A673 (cell line): ENCODE measurements at regions of chr6 and their contacts with region 1.

Region 1: DNA sequence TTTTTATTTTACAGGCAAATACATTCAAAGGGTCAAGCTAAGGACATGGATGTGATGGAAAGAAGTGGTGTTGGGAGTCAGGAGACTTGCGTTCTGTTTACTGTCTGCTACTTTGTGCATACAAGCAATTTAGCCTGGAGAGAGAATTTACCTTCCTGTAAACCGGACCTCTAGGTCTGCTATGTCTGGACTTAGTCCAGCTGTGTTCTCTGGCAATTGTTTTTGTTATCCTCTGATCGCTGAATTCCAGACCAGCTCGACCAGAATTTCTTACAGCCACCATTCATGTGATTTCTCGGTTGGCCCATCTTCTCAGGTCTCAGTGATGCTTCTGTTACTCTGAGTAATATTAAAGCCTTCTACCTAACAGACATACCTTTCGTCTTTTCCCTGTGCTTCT is 75.1 kb downstream of the LRRC1 start:
- DNase-seq: no peak
- H3K4me3 ChIP-seq: no peak overlapping the region
- H3K27ac ChIP-seq: no peak overlapping the region
- H3K4me1 ChIP-seq: no peaks in the 10 kb centered on the region
- H3K27me3 ChIP-seq: no peaks in the 10 kb centered on the region
- CTCF ChIP-seq: no peak

Region 2: GRCh38 chr6:53916804-53917463 is 47.0 kb after region 1 on chr6:
- CTCF ChIA-PET with region 1: no interaction called
- POLR2A ChIA-PET with region 1: no interaction called
- intact Hi-C with region 1: loop called (anchors 5 kb)
- DNase-seq: no peak
- H3K4me3 ChIP-seq: no peak overlapping the region
- H3K27ac ChIP-seq: no peak overlapping the region
- H3K4me1 ChIP-seq: no peaks in the 10 kb centered on the region
- H3K27me3 ChIP-seq: no peaks in the 10 kb centered on the region
- CTCF ChIP-seq: no peak